Activated T-helper 1 cell treated with anti-CD3 and anti-CD28 coated beads, Interleukin-12 subunit alpha, Interleukin-12 subunit beta, Interleukin-2, Interleukin-4 antibody, amounts not matched to agents 30 ng/mL and 10 ng/mL and 1 ng/mL, durations not matched to agents 14 hours and 24 hours and 36 hours (primary cell): ENCODE measurements at regions of chr7 and their contacts with region 1.

Region 1: DNA sequence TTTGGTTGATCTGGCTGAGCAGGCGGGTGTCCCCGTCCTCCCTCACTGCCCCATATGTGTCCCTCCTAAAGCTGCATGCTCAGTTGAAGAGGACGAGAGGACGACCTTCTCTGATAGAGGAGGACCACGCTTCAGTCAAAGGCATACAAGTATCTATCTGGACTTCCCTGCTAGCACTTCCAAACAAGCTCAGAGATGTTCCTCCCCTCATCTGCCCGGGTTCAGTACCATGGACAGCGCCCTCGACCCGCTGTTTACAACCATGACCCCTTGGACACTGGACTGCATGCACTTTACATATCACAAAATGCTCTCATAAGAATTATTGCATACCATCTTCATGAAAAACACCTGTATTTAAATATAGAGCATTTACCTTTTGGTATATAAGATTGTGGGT is 26.9 kb upstream of the TRIM56 start:
- DNase-seq: peak; percentile 38
- H3K4me3 Mint-ChIP-seq: no peak overlapping the region
- H3K27ac Mint-ChIP-seq: no peak overlapping the region
- H3K4me1 Mint-ChIP-seq: peaks cover 7% of the 10 kb centered on the region
- H3K27me3 Mint-ChIP-seq: peaks cover 24% of the 10 kb centered on the region

Region 2: GRCh38 chr7:100803398-100804233 is 254.7 kb before region 1 on chr7:
- intact Hi-C with region 1: loop called (anchors 2 kb)
- DNase-seq: peak; percentile 42
- H3K4me3 Mint-ChIP-seq: no peak overlapping the region
- H3K27ac Mint-ChIP-seq: peak overlapping the region; percentile 71
- H3K4me1 Mint-ChIP-seq: peaks cover 10% of the 10 kb centered on the region
- H3K27me3 Mint-ChIP-seq: peaks cover 13% of the 10 kb centered on the region

Region 3: DNA sequence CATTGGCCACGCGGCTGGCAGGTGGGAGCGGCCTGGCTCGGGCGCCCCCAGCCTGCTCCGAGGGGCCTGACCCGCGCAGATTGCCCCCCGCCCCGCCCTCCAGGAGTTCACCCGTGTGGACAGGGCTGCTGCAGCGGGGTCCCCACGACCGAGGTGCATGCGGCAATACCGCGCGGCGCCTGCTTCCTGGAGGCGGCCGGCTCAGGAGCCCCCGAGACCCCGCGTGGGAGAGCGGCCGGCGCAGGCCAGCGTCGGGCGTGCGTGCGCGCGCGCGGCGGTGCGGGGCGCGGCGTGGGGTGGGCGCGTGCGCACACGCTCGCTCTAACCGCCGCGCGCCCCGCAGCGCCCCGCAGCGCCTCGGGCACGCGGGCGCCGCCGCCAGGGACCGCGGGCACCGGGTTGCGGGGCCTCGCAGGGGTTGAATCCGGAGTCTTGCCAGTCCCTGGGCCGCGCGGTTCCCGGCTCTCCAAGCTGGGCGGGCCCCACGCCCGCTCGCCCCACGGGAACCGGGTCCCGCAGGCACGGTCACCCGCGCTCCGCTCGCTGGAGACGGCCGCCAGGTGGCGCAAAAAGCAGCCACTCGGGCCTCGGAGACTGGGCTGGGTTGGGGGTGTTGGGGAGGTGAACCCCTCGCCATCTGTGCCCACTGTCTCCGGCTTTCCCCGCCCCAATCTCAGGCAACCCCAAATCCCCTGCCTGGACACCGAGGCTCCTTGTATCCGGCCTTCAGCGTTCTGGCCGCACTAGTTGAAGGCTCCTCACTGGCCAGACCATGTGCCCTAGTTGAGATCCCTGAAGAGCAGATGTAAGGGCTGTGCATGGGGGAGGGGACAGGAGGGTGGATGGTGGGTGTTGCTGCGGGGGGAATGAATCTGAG is 161.4 kb before region 1 on chr7:
- intact Hi-C with region 1: loop called (anchors 1 kb)
- DNase-seq: peak; percentile 51
- H3K4me3 Mint-ChIP-seq: peak overlapping the region; percentile 63
- H3K27ac Mint-ChIP-seq: no peak overlapping the region
- H3K4me1 Mint-ChIP-seq: peaks cover 7% of the 10 kb centered on the region
- H3K27me3 Mint-ChIP-seq: peaks cover 51% of the 10 kb centered on the region

Region 4: GRCh38 chr7:101017064-101017777 is 41.1 kb before region 1 on chr7:
- intact Hi-C with region 1: loop called (anchors 2 kb)
- DNase-seq: peak; percentile 65
- H3K4me3 Mint-ChIP-seq: peak overlapping the region; percentile 85
- H3K27ac Mint-ChIP-seq: peak overlapping the region; percentile 88
- H3K4me1 Mint-ChIP-seq: peaks cover 21% of the 10 kb centered on the region
- H3K27me3 Mint-ChIP-seq: peaks cover 14% of the 10 kb centered on the region

Region 5: DNA sequence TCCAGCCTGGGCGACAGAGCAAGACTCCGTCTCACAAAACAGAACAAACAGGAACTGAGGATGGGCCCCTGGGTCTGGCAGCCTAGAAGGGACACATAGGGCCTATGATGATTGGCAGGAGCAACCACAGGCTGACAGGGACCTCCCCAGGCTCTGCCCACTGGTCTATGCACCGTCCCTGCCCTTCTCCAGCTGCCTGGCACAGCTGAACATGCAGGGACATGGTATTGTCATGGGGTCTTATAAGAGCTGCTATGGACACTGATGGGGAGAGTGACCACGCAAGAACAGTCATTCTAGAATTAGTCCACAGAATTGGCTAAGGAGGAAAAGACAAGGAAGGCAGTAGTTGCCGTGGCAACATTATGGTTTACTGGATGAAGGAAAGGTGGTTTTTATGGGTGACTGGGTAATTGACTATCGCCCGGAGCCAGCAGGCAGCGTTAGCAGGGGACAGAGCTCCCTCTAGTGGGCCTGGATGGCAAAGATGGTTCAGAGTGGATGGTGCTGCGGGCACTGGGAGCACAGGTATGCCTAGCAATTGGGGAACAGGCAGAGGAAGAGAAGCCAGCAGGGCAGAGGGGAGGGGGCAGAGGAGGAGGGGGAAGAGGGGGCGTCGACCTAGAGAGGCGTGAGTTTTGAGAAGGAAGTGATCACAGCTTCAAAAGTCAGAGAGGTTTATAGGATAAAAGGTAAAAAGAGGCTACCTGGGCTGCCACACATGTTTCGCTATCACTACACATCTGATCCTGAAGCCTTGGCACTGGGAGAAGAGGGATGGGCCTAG is 19.1 kb after region 1 on chr7:
- intact Hi-C with region 1: loop called (anchors 2 kb)
- DNase-seq: peak; percentile 73
- H3K4me3 Mint-ChIP-seq: no peak overlapping the region
- H3K27ac Mint-ChIP-seq: no peak overlapping the region
- H3K4me1 Mint-ChIP-seq: peaks cover 7% of the 10 kb centered on the region
- H3K27me3 Mint-ChIP-seq: peaks cover 9% of the 10 kb centered on the region